CD4-positive, alpha-beta memory T cell (primary cell): ENCODE measurements at regions of chr13 and their contacts with region 1.

Region 1: GRCh38 chr13:42354241-42355091 is 82.5 kb downstream of the AKAP11 start:
- DNase-seq: peak; percentile 27 to 52 (median 37)
- H3K4me3 ChIP-seq: peak overlapping the region in 1 of 2 donors; percentile 10
- H3K4me3 Mint-ChIP-seq: peak overlapping the region; percentile 56 to 86 (median 74)
- H3K27ac ChIP-seq: peak overlapping the region; percentile 54
- H3K27ac Mint-ChIP-seq: peak overlapping the region; percentile 91 to 99 (median 93)
- H3K4me1 ChIP-seq: peaks cover 43% of the 10 kb centered on the region
- H3K4me1 Mint-ChIP-seq: peaks cover 28 to 46% (median 38%) of the 10 kb centered on the region in 4 donors
- H3K27me3 ChIP-seq: no peaks in the 10 kb centered on the region
- H3K27me3 Mint-ChIP-seq: no peaks in the 10 kb centered on the region

Region 2: GRCh38 chr13:42271337-42272114 is 82.9 kb before region 1 on chr13:
- CTCF ChIA-PET with region 1: no interaction called
- POLR2A ChIA-PET with region 1: interaction called, 3 read pairs
- intact Hi-C with region 1: loop called (anchors 10 kb)
- DNase-seq: peak; percentile 95 to 98 (median 96)
- H3K4me3 ChIP-seq: peak overlapping the region; percentile 82 to 93
- H3K4me3 Mint-ChIP-seq: peak overlapping the region; percentile 88 to 99 (median 97)
- H3K27ac ChIP-seq: peak overlapping the region; percentile 94
- H3K27ac Mint-ChIP-seq: peak overlapping the region; percentile 98 to 99 (median 98)
- H3K4me1 ChIP-seq: peaks cover 46% of the 10 kb centered on the region
- H3K4me1 Mint-ChIP-seq: peaks cover 35 to 60% (median 47%) of the 10 kb centered on the region in 4 donors
- H3K27me3 ChIP-seq: no peaks in the 10 kb centered on the region
- H3K27me3 Mint-ChIP-seq: no peaks in the 10 kb centered on the region

Region 3: GRCh38 chr13:42320375-42320787 is 34.1 kb before region 1 on chr13:
- CTCF ChIA-PET with region 1: no interaction called
- POLR2A ChIA-PET with region 1: no interaction called
- intact Hi-C with region 1: no loop called
- DNase-seq: no peak
- H3K4me3 ChIP-seq: no peak overlapping the region
- H3K4me3 Mint-ChIP-seq: peak overlapping the region in 2 of 8 donors; percentile 38 to 60
- H3K27ac ChIP-seq: no peak overlapping the region
- H3K27ac Mint-ChIP-seq: peak overlapping the region in 6 of 7 donors; percentile 4 to 69 (median 46)
- H3K4me1 ChIP-seq: peaks cover 8% of the 10 kb centered on the region
- H3K4me1 Mint-ChIP-seq: peaks cover 14 to 24% (median 17%) of the 10 kb centered on the region in 4 donors
- H3K27me3 ChIP-seq: no peaks in the 10 kb centered on the region
- H3K27me3 Mint-ChIP-seq: no peaks in the 10 kb centered on the region

Region 4: GRCh38 chr13:42377640-42378382 is 23.3 kb after region 1 on chr13:
- CTCF ChIA-PET with region 1: interaction called, 4 read pairs
- POLR2A ChIA-PET with region 1: interaction called, 5 read pairs
- intact Hi-C with region 1: loop called (anchors 1 kb)
- DNase-seq: peak in 4 of 5 donors; percentile 22 to 65 (median 36)
- H3K4me3 ChIP-seq: no peak overlapping the region
- H3K4me3 Mint-ChIP-seq: peak overlapping the region in 5 of 8 donors; percentile 20 to 60 (median 35)
- H3K27ac ChIP-seq: peak overlapping the region; percentile 17
- H3K27ac Mint-ChIP-seq: peak overlapping the region; percentile 66 to 88 (median 77)
- H3K4me1 ChIP-seq: peaks cover 27% of the 10 kb centered on the region
- H3K4me1 Mint-ChIP-seq: peaks cover 17 to 38% (median 25%) of the 10 kb centered on the region in 4 donors
- H3K27me3 ChIP-seq: no peaks in the 10 kb centered on the region
- H3K27me3 Mint-ChIP-seq: no peaks in the 10 kb centered on the region

Region 5: DNA sequence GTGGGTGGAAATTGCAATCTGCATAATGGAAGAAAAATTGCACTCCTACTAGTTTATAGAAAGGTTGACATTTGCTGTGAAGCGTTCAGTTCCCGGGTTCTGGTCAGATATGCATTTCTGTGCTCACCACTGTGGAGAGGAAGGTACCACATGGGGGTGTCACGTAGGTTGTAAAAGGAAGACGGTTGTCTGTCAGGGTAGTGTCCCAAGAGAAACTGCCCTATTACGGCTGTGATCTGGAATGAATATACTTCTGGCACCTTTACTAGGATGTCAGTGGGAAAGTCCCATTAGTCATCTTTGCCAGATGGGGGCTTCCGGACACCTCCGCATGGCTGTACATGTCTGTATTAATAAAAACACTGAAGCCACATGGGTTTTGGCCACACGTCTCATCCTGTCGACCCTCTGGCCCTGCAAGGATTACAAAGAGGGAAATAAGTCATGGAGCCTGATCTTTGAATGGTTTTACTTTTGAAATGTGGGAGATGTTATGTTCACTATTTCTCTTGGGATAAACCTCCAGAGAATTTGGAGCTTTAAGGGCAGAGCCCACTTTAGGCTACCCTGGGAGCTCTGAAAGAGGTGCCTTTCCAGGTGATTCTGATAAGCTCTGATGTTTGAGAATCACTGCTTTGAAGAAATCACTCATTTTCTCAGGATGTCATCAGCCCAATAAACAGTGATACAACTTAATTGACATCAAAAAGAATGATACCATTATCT is 51.4 kb after region 1 on chr13:
- CTCF ChIA-PET with region 1: interaction called, 5 read pairs
- POLR2A ChIA-PET with region 1: interaction called, 6 read pairs
- intact Hi-C with region 1: loop called (anchors 2 kb)
- DNase-seq: peak in 2 of 5 donors; percentile 17 to 82
- H3K4me3 ChIP-seq: peak overlapping the region in 1 of 2 donors; percentile 17
- H3K4me3 Mint-ChIP-seq: peak overlapping the region in 7 of 8 donors; percentile 45 to 83 (median 70)
- H3K27ac ChIP-seq: peak overlapping the region; percentile 44
- H3K27ac Mint-ChIP-seq: peak overlapping the region; percentile 50 to 92 (median 80)
- H3K4me1 ChIP-seq: peaks cover 20% of the 10 kb centered on the region
- H3K4me1 Mint-ChIP-seq: peaks cover 19 to 39% (median 25%) of the 10 kb centered on the region in 4 donors
- H3K27me3 ChIP-seq: no peaks in the 10 kb centered on the region
- H3K27me3 Mint-ChIP-seq: no peaks in the 10 kb centered on the region

Region 6: GRCh38 chr13:42478531-42479156 is 124.2 kb after region 1 on chr13:
- CTCF ChIA-PET with region 1: interaction called, 29 read pairs
- POLR2A ChIA-PET with region 1: interaction called, 5 read pairs
- intact Hi-C with region 1: loop called (anchors 1 kb)
- DNase-seq: peak in 2 of 5 donors; percentile 5 to 11
- H3K4me3 ChIP-seq: no peak overlapping the region
- H3K4me3 Mint-ChIP-seq: no peak overlapping the region
- H3K27ac ChIP-seq: no peak overlapping the region
- H3K27ac Mint-ChIP-seq: peak overlapping the region in 1 of 7 donors; percentile 20
- H3K4me1 ChIP-seq: no peaks in the 10 kb centered on the region
- H3K4me1 Mint-ChIP-seq: peaks cover 0 to 6% (median 3%) of the 10 kb centered on the region in 4 donors
- H3K27me3 ChIP-seq: no peaks in the 10 kb centered on the region
- H3K27me3 Mint-ChIP-seq: no peaks in the 10 kb centered on the region

Region 7: DNA sequence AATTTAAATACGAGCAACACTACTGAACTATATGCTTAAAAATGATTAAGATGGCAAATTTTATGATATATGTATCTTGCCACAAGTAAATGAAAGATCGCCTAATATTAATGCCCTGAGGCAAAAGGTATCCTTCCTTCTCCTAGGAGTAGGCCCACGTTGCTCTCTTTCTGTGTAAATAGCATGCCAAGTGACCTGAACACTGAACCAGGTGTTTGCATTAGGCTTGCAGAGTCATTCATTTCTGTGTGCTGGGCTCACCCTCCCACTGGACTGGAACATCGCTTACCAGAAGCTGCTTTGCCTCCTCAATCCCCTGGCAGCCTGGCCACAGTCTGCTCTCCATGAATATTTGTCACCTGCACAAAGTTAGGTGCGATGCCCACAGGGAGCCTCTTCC is 136.2 kb after region 1 on chr13:
- CTCF ChIA-PET with region 1: no interaction called
- POLR2A ChIA-PET with region 1: no interaction called
- intact Hi-C with region 1: no loop called
- DNase-seq: no peak
- H3K4me3 ChIP-seq: no peak overlapping the region
- H3K4me3 Mint-ChIP-seq: no peak overlapping the region
- H3K27ac ChIP-seq: no peak overlapping the region
- H3K27ac Mint-ChIP-seq: no peak overlapping the region
- H3K4me1 ChIP-seq: peaks cover 22% of the 10 kb centered on the region
- H3K4me1 Mint-ChIP-seq: peaks cover 14 to 24% (median 21%) of the 10 kb centered on the region in 4 donors
- H3K27me3 ChIP-seq: no peaks in the 10 kb centered on the region
- H3K27me3 Mint-ChIP-seq: no peaks in the 10 kb centered on the region

Region 8: DNA sequence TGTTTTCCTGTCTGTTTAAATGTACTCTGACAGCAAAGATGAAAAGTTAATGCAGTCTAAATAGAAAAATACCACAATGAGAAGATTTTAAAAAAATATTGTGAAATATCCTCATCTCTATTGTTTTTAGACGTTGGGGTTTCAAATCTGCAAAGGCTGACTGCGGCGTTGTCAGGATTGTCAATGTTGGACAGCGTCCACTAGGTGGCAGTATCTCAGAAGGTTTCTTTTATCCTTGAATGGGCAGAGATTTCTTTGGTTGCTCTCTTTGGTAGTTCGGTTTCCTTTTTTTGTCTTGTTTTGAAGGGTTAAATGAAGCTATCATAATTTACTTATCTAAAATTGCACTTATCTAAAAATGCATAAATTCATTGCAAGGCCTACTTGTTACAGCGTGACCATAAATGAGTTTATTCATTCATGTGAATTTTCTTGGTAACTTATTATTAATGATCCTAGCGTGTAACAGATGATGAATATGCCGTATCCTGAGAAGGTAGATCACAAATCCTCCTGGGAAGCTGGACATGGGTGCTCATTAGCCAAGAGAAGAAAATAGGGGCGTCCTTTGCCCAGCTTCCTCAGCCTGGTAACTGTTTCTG is 240.6 kb after region 1 on chr13:
- CTCF ChIA-PET with region 1: interaction called, 5 read pairs
- POLR2A ChIA-PET with region 1: no interaction called
- intact Hi-C with region 1: loop called (anchors 1 kb)
- DNase-seq: peak; percentile 23 to 43 (median 38)
- H3K4me3 ChIP-seq: no peak overlapping the region
- H3K4me3 Mint-ChIP-seq: no peak overlapping the region
- H3K27ac ChIP-seq: no peak overlapping the region
- H3K27ac Mint-ChIP-seq: peak overlapping the region in 1 of 7 donors; percentile 39
- H3K4me1 ChIP-seq: no peaks in the 10 kb centered on the region
- H3K4me1 Mint-ChIP-seq: peaks cover 0 to 2% (median under 1%) of the 10 kb centered on the region in 4 donors
- H3K27me3 ChIP-seq: no peaks in the 10 kb centered on the region
- H3K27me3 Mint-ChIP-seq: peaks cover 0 to 2% of the 10 kb centered on the region in 2 donors